ENCODE measurements at regions of chr17 and their contacts with region 1.

Region 1: DNA sequence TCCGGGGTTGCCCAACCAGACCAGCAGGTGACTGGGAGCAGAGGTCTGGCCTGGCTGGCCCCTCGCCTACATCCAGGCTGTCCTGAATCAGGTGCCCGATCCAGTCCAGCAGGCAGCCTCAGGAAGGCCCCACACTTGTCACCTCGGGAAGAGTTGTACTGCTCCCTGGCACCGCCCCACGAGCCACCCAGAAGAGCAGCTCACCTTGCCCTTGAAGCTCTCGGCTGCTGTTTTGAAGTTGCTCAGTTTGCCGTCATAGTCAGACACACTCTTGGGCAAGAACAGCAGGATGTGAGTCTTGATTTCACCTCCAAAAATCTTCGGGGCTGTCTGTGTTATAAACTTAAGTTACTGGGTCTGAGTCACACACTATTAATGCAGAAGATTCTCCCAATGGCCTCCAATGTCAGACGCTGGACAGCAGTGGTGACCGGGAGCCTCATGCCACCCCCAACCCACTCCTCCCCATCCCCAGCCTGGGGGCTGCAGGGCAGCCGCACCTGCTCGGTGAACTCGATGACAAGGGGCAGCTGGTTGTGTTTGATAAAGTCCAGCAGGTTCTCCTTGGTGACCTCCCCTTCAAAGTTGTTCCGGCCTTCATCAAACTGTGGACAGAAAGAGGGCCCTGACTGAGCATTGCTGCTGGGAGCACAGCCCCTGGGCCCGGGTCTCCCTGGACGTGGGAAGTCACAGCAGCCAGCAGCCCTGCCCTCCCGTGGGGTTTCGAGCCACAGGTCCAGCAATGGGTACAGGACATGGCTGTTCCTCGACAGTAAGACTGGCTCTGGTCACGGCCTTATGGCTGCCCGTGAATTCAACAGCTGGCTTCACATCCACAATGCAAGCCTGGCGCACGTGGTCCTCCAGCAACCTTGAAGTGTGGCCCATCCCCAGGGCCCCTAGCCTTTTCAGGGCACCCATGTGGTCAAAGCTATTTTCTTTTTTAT is 12.2 kb upstream of the PPP1R27 start:
- DNase-seq: no peak
- ATAC-seq: no peak
- H3K4me3 ChIP-seq: no peak overlapping the region
- H3K27ac ChIP-seq: no peak overlapping the region
- H3K4me1 ChIP-seq: no peaks in the 10 kb centered on the region
- H3K27me3 ChIP-seq: no peaks in the 10 kb centered on the region
- CTCF ChIP-seq: no peak

Region 2: GRCh38 chr17:81814748-81815645 is 32.0 kb before region 1 on chr17:
- CTCF ChIA-PET with region 1: no interaction called
- POLR2A ChIA-PET with region 1: no interaction called
- in situ Hi-C with region 1: no loop called
- intact Hi-C with region 1: no loop called
- DNase-seq: no peak
- ATAC-seq: peak; percentile 37
- H3K4me3 ChIP-seq: no peak overlapping the region
- H3K27ac ChIP-seq: no peak overlapping the region
- H3K4me1 ChIP-seq: peaks cover 4% of the 10 kb centered on the region
- H3K27me3 ChIP-seq: no peaks in the 10 kb centered on the region
- CTCF ChIP-seq: no peak

Region 3: DNA sequence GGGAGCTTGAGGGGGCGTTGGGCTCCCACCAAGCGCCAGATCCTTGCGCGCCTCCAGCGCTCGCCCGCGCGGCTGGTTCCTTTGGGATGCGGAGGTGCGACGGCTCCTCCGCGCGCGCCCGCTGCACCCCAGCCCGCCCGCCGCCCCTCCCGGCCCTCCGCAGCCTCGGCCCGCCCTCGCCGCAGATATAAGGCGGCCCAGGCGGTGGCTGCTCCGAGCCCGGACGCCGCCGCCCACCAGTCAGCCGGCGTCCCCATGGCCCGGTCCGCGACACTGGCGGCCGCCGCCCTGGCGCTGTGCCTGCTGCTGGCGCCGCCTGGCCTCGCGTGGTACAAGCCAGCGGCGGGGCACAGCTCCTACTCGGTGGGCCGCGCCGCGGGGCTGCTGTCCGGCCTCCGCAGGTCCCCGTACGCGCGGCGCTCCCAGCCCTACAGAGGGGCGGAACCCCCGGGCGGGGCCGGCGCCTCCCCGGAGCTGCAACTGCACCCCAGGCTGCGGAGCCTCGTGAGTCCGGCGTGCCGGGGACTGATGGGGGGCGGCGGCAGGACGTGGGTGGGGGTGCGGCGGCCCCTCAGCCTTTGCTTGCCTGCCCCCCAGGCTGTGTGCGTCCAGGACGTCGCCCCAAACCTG is 55.1 kb after region 1 on chr17 and contains the start of gene NPB:
- CTCF ChIA-PET with region 1: no interaction called
- POLR2A ChIA-PET with region 1: no interaction called
- in situ Hi-C with region 1: no loop called
- intact Hi-C with region 1: no loop called
- DNase-seq: no peak
- ATAC-seq: peak; percentile 6; the same call in 1 of the 2 replicates
- H3K4me3 ChIP-seq: peak within 1 kb of the TSS in 1 of 2 experiments; percentile 13; a peak in 1 of 4 replicates
- H3K27ac ChIP-seq: no peak within 1 kb of the TSS
- H3K4me1 ChIP-seq: peaks cover 27% of the 10 kb centered on the region
- H3K27me3 ChIP-seq: no peaks in the 10 kb centered on the region
- CTCF ChIP-seq: no peak
- total RNA-seq, gene NPB: 3.9 TPM

Region 4: DNA sequence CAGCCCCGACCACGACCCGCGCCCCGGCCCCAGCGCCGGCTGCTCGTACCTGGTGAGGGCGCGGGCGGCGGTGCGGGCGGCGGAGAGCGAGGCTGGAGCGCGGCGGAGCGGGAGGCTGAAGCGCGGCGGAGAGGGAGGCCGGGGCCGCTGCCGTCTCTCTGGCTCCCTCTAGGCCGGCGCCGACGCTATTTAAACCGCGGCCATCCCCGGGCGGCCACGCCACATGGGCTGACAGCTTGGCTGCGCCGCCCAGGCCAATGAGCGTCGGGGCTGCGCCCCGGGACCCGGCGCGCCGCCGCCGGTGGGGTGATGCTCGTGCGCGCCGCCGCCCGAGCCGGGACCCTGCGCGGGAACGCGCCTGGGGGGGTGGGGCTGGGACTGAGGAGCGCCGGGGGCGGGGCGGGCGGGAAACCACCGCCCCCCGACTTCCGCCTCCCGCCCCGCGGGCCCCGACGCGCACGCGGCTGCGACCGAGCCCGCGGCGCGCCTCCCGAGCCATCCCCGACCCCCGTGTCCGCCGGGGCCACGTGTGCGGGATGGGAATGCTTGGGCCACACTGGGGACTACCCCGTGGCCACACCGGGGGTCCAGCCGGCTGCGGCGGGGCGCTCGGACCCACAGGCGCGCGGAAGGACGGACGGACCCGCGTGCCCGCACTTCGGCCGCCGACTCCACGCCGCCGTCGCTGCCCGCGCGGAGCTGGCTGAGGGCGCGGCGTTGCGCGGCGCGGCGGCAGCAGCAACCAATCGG is 251.2 kb after region 1 on chr17 and contains the start of gene FASN:
- CTCF ChIA-PET with region 1: no interaction called
- POLR2A ChIA-PET with region 1: interaction called, 10 read pairs
- in situ Hi-C with region 1: no loop called
- intact Hi-C with region 1: no loop called
- DNase-seq: no peak
- ATAC-seq: peak; percentile 77
- H3K4me3 ChIP-seq: peak within 1 kb of the TSS; percentile 86 to 88
- H3K27ac ChIP-seq: peak within 1 kb of the TSS; percentile 97
- H3K4me1 ChIP-seq: peaks cover 59% of the 10 kb centered on the region
- H3K27me3 ChIP-seq: no peaks in the 10 kb centered on the region
- CTCF ChIP-seq: peak; percentile 87; the same call in 1 of the 2 replicates
- total RNA-seq, gene FASN: 956 TPM

Measured in Panc1 (cell line).